Ovary (tissue), 10 donors: ENCODE measurements at regions of chr18 and their contacts with region 1.

Region 1: GRCh38 chr18:9771261-9771976 is 63.3 kb downstream of the RAB31 start:
- DNase-seq: peak; percentile 57 to 86 (median 82)
- H3K4me3 ChIP-seq: no peak overlapping the region
- H3K27ac ChIP-seq: no peak overlapping the region
- H3K4me1 ChIP-seq: peaks cover 7% of the 10 kb centered on the region
- H3K27me3 ChIP-seq: no peaks in the 10 kb centered on the region
- CTCF ChIP-seq: peak; percentile 63 to 86 (median 85)
- EP300 ChIP-seq: no peak
- POLR2A ChIP-seq: no peak

Region 2: DNA sequence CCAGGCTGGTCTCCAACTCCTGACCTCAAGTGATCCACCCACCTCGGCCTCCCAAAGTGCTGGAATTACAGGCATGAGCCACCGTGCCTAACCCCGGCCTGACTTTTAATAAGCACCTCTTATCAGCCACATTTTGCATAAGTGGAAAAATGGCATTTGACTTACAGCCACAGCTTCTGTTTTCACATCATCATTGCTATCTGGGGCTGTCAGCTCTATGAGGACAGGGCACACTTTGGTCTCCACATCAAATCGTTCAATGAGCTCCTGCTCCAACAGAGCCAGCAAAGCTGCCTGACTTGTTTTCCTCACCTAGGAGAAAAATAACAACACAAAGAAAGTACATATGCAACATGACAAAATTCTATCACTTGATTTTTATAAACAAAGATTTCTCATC is 183.5 kb before region 1 on chr18:
- intact Hi-C with region 1: loop called in 1 of 4 experiments (anchors 10 kb)
- DNase-seq: no peak
- H3K4me3 ChIP-seq: no peak overlapping the region
- H3K27ac ChIP-seq: no peak overlapping the region
- H3K4me1 ChIP-seq: no peaks in the 10 kb centered on the region
- H3K27me3 ChIP-seq: no peaks in the 10 kb centered on the region
- CTCF ChIP-seq: no peak
- EP300 ChIP-seq: no peak
- POLR2A ChIP-seq: no peak